ENCODE measurements at regions of chr18 and their contacts with region 1.

Region 1: DNA sequence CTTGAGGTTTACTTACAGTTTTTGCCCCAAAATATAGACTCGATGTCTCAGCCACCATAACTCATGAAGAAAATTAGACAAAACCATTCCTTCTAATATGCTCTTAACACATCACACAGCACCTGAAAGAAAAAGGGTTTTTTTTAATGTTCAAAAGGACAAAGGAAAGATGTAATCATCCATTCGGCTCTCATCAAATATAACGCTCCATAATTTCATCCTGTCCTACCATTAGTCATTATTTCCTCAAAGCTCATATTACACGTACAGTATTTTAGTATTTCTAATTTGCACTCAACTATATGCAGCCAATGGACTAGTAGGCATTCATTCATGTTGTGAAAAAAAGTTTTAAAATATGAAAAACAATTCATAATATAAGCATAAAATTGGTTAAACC is 24.8 kb downstream of the ESCO1 start:
- DNase-seq: no peak
- H3K4me3 ChIP-seq: no peak overlapping the region
- H3K27ac ChIP-seq: no peak overlapping the region
- H3K4me1 ChIP-seq: no peaks in the 10 kb centered on the region
- CTCF ChIP-seq: no peak

Region 2: DNA sequence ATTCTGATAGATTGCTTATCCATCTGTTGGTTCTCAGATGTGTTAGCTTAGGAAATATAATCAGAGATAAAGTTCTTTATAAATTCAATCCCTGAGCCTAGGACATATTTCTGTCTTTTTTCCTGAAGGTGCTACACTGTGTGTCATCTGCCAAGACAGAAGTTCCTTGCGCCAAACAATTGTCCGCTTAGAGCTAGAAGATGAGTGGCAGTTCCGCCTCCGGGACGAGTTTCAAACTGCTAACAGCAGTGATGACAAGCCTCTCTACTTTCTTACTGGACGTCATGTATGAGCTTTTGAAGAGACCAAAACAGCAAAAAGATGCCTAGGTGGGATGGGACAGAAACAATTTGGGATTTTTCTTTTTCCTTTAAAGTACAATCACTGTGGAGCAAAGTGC is 53.1 kb before region 1 on chr18:
- CTCF ChIA-PET with region 1: no interaction called
- POLR2A ChIA-PET with region 1: no interaction called
- intact Hi-C with region 1: no loop called
- DNase-seq: no peak
- H3K4me3 ChIP-seq: no peak overlapping the region
- H3K27ac ChIP-seq: no peak overlapping the region
- H3K4me1 ChIP-seq: no peaks in the 10 kb centered on the region
- CTCF ChIP-seq: no peak

Region 3: GRCh38 chr18:21548637-21549036 is 27.0 kb before region 1 on chr18:
- CTCF ChIA-PET with region 1: no interaction called
- POLR2A ChIA-PET with region 1: no interaction called
- intact Hi-C with region 1: loop called (anchors 5 kb)
- DNase-seq: no peak
- H3K4me3 ChIP-seq: no peak overlapping the region
- H3K27ac ChIP-seq: no peak overlapping the region
- H3K4me1 ChIP-seq: no peaks in the 10 kb centered on the region
- CTCF ChIP-seq: no peak

Region 4: GRCh38 chr18:21978546-21979170 is 403.0 kb after region 1 on chr18:
- CTCF ChIA-PET with region 1: no interaction called
- POLR2A ChIA-PET with region 1: no interaction called
- intact Hi-C with region 1: no loop called
- DNase-seq: no peak
- H3K4me3 ChIP-seq: no peak overlapping the region
- H3K27ac ChIP-seq: no peak overlapping the region
- H3K4me1 ChIP-seq: no peaks in the 10 kb centered on the region
- CTCF ChIP-seq: no peak